Right ventricle myocardium inferior (tissue), 1 donor: ENCODE measurements at regions of chr2 and their contacts with region 1.

Region 1: GRCh38 chr2:172977270-172978062 is 98.2 kb upstream of the MAP3K20 start:
- DNase-seq: no peak
- ATAC-seq: peak; percentile 62

Region 2: GRCh38 chr2:173021939-173022371 is 44.5 kb after region 1 on chr2:
- intact Hi-C with region 1: loop called (anchors 5 kb)
- DNase-seq: no peak
- ATAC-seq: peak; percentile 81

Region 3: DNA sequence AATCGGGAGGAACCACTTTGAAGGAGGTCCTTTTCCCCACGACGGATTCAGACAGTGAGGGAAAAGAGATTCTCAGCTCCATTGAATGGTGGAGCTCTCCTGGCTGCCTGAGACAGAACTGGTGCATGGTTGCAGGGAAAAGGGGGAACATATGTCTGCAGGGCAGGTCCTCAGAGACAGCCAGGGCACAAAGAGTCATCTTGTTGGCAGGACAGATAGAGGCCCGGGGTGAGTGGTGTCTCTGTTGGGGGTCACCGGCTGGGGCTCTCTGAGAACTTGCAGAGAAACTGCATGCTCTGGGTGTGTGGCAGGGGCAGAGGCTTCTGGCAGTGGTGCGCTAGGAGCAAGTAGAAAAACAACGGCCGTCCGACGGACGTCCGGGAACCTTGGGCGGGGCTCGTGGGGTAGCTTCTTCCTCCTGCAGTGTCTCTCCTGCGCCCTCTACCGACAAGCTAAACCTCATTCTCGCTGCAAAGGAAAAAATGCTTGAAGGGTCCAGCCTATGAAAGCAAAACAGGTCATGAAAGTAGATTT is 471.5 kb after region 1 on chr2:
- intact Hi-C with region 1: loop called (anchors 5 kb)
- DNase-seq: peak; percentile 81
- ATAC-seq: peak; percentile 94